GM12878 (cell line): ENCODE measurements at regions of chr11 and their contacts with region 1.

Region 1: DNA sequence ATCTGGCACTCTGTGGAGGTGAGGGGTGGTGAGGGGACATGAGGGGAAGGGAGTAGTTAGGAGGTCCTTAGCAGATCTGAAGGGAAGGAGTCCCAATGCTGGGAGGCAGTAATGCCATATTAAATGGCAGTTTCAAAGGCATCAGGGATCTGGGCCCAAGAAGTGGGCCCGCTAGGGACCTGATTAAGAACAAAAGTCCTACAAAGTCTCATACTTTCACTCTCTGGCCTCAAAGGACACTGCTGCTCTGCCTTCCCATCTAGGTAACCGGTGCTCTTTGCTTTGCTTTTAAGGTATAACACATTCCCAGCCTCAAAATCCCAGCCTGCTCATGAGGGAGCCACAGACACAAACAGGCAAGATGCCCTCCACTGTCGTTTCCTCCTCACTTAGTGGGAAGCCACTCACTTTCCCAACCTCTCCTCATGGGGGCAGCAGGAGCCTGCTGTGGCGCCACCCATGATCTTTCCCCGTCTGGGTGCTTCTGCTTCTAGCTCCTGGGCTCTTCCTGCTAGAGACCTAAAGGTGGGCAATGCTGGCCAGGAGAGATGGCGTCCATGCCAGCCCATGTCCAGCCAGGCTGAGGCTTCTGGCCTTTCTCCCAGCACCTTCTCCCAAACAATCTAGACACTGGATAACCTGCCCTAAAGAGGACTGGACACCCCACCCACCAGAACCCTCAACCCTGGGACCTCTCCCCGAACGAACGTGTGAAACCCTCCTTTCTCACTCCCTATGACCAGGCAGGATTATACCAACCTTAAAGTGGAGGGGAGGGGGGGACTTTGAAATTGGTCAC is 68.3 kb downstream of the PLEKHA7 start:
- DNase-seq: peak; percentile 61
- ATAC-seq: peak; percentile 92
- H3K4me3 ChIP-seq: peak overlapping the region; percentile 39; the same call in 1 of the 2 replicates
- H3K27ac ChIP-seq: peak overlapping the region; percentile 64
- H3K4me1 ChIP-seq: peaks cover 12% of the 10 kb centered on the region
- H3K27me3 ChIP-seq: no peaks in the 10 kb centered on the region
- CTCF ChIP-seq: peak; percentile 86 to 89 (median 88)
- EP300 ChIP-seq: no peak
- POLR2A ChIP-seq: no peak
- RAD21 ChIP-seq: peak; percentile 97

Region 2: DNA sequence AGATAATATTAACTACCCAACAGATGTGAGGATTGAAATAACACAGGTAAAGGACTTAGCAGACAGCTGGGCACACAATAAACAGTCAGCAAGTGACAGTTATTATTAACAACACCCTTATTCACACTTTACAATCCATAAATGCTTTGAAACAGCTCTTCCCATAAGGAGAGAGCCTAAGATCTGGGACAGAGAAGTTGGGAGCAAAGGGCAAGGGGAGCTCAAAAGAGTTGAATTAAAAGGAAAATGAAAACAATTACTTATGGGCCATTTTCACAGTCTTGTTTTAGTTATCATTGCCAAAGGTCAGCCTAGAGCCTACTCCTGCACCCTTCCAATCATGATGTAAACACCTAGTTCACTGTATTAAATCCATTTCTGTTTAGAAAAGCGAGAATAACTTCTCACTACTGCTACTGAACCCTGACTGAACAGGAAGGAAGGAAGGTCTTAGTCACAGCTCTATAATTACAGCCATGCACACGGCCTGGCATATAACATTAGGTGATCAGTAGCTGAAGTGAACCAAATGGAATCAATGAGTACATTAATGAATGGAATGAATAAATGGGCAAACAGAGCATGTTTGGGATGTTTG is 43.0 kb before region 1 on chr11:
- CTCF ChIA-PET with region 1: interaction called, 4 read pairs
- POLR2A ChIA-PET with region 1: no interaction called
- RAD21 ChIA-PET with region 1: interaction called, 17 read pairs
- SMC1A ChIA-PET with region 1: interaction called, 17 read pairs
- in situ Hi-C with region 1: no loop called
- intact Hi-C with region 1: no loop called
- DNase-seq: peak; percentile 65
- ATAC-seq: peak; percentile 86
- H3K4me3 ChIP-seq: no peak overlapping the region; the same call in 1 of the 2 replicates
- H3K27ac ChIP-seq: peak overlapping the region; percentile 92
- H3K4me1 ChIP-seq: peaks cover 31% of the 10 kb centered on the region
- H3K27me3 ChIP-seq: no peaks in the 10 kb centered on the region
- CTCF ChIP-seq: no peak
- EP300 ChIP-seq: no peak
- POLR2A ChIP-seq: no peak
- RAD21 ChIP-seq: no peak

Region 3: GRCh38 chr11:16958833-16959232 is 13.0 kb after region 1 on chr11:
- CTCF ChIA-PET with region 1: interaction called, 5 read pairs
- POLR2A ChIA-PET with region 1: no interaction called
- RAD21 ChIA-PET with region 1: interaction called, 3 read pairs
- SMC1A ChIA-PET with region 1: interaction called, 10 read pairs
- in situ Hi-C with region 1: no loop called
- intact Hi-C with region 1: no loop called
- DNase-seq: no peak
- ATAC-seq: peak; percentile 58
- H3K4me3 ChIP-seq: no peak overlapping the region
- H3K27ac ChIP-seq: no peak overlapping the region
- H3K4me1 ChIP-seq: peaks cover 9% of the 10 kb centered on the region
- H3K27me3 ChIP-seq: no peaks in the 10 kb centered on the region
- CTCF ChIP-seq: no peak
- EP300 ChIP-seq: no peak
- POLR2A ChIP-seq: no peak
- RAD21 ChIP-seq: no peak

Region 4: GRCh38 chr11:17063171-17064002 is 117.5 kb after region 1 on chr11:
- CTCF ChIA-PET with region 1: interaction called, 126 read pairs
- POLR2A ChIA-PET with region 1: interaction called, 3 read pairs
- RAD21 ChIA-PET with region 1: interaction called, 89 read pairs
- SMC1A ChIA-PET with region 1: interaction called, 80 read pairs
- in situ Hi-C with region 1: loop called (anchors 5 kb)
- intact Hi-C with region 1: loop called (anchors 1 kb)
- DNase-seq: peak; percentile 17
- ATAC-seq: peak; percentile 100
- H3K4me3 ChIP-seq: no peak overlapping the region
- H3K27ac ChIP-seq: no peak overlapping the region
- H3K4me1 ChIP-seq: no peaks in the 10 kb centered on the region
- H3K27me3 ChIP-seq: no peaks in the 10 kb centered on the region
- CTCF ChIP-seq: peak; percentile 73 to 91 (median 83)
- EP300 ChIP-seq: no peak
- POLR2A ChIP-seq: no peak
- RAD21 ChIP-seq: peak; percentile 95

Region 5: GRCh38 chr11:17207317-17208258 is 261.7 kb after region 1 on chr11 and contains the start of gene PIK3C2A:
- CTCF ChIA-PET with region 1: interaction called, 3 read pairs
- POLR2A ChIA-PET with region 1: no interaction called
- RAD21 ChIA-PET with region 1: interaction called, 4 read pairs
- SMC1A ChIA-PET with region 1: interaction called, 4 read pairs
- in situ Hi-C with region 1: no loop called
- intact Hi-C with region 1: loop called (anchors 10 kb)
- DNase-seq: peak; percentile 64
- ATAC-seq: peak; percentile 98
- H3K4me3 ChIP-seq: peak within 1 kb of the TSS; percentile 95
- H3K27ac ChIP-seq: peak within 1 kb of the TSS; percentile 87
- H3K4me1 ChIP-seq: peaks cover 3% of the 10 kb centered on the region
- H3K27me3 ChIP-seq: no peaks in the 10 kb centered on the region
- CTCF ChIP-seq: no peak
- EP300 ChIP-seq: no peak
- POLR2A ChIP-seq: peak; percentile 97
- RAD21 ChIP-seq: no peak
- polyA plus RNA-seq, gene PIK3C2A: 1.6 to 2.5 TPM